Heart left ventricle (tissue), 16 donors: ENCODE measurements at regions of chr5 and their contacts with region 1.

Region 1: GRCh38 chr5:148730943-148731861 is 76.9 kb upstream of the HTR4 start:
- DNase-seq: peak; percentile 65 to 81 (median 76)
- ATAC-seq: peak; percentile 67 to 90 (median 86)
- H3K4me3 ChIP-seq: peak overlapping the region in 5 of 12 donors; percentile 7 to 28 (median 8)
- H3K27ac ChIP-seq: no peak overlapping the region
- H3K4me1 ChIP-seq: peaks cover 0 to 11% (median 2%) of the 10 kb centered on the region in 12 donors
- H3K27me3 ChIP-seq: no peaks in the 10 kb centered on the region
- CTCF ChIP-seq: peak; percentile 85 to 99 (median 92)
- POLR2A ChIP-seq: no peak

Region 2: GRCh38 chr5:147949711-147950573 is 781.3 kb before region 1 on chr5:
- intact Hi-C with region 1: loop called in 3 of 10 experiments (anchors 5 to 10 kb)
- DNase-seq: no peak
- ATAC-seq: peak in 1 of 4 donors; percentile 57
- H3K4me3 ChIP-seq: no peak overlapping the region
- H3K27ac ChIP-seq: no peak overlapping the region
- H3K4me1 ChIP-seq: no peaks in the 10 kb centered on the region
- H3K27me3 ChIP-seq: no peaks in the 10 kb centered on the region
- CTCF ChIP-seq: peak; percentile 54 to 78 (median 71)
- POLR2A ChIP-seq: no peak

Region 3: GRCh38 chr5:148290271-148291195 is 440.7 kb before region 1 on chr5:
- intact Hi-C with region 1: loop called in 6 of 10 experiments (anchors 2 to 10 kb)
- DNase-seq: no peak
- ATAC-seq: peak; percentile 55 to 65 (median 61)
- H3K4me3 ChIP-seq: no peak overlapping the region
- H3K27ac ChIP-seq: no peak overlapping the region
- H3K4me1 ChIP-seq: peaks cover 0 to 3% (median 0%) of the 10 kb centered on the region in 12 donors
- H3K27me3 ChIP-seq: no peaks in the 10 kb centered on the region
- CTCF ChIP-seq: peak; percentile 17 to 60 (median 45)
- POLR2A ChIP-seq: no peak

Region 4: GRCh38 chr5:148957591-148958202 is 226.5 kb after region 1 on chr5:
- intact Hi-C with region 1: loop called in 3 of 10 experiments (anchors 5 kb)
- DNase-seq: peak in 3 of 5 donors; percentile 20 to 47 (median 29)
- ATAC-seq: peak in 2 of 4 donors; percentile 43 to 53
- H3K4me3 ChIP-seq: no peak overlapping the region
- H3K27ac ChIP-seq: no peak overlapping the region
- H3K4me1 ChIP-seq: peaks cover 0 to 12% (median 0%) of the 10 kb centered on the region in 12 donors
- H3K27me3 ChIP-seq: no peaks in the 10 kb centered on the region
- CTCF ChIP-seq: peak; percentile 69 to 88 (median 80)
- POLR2A ChIP-seq: no peak

Region 5: GRCh38 chr5:149035372-149035790 is 304.2 kb after region 1 on chr5:
- intact Hi-C with region 1: loop called (anchors 1 to 5 kb)
- DNase-seq: peak; percentile 71 to 88 (median 77)
- ATAC-seq: peak; percentile 82 to 94 (median 91)
- H3K4me3 ChIP-seq: no peak overlapping the region
- H3K27ac ChIP-seq: no peak overlapping the region
- H3K4me1 ChIP-seq: peaks cover 0 to 39% (median 8%) of the 10 kb centered on the region in 12 donors
- H3K27me3 ChIP-seq: no peaks in the 10 kb centered on the region
- CTCF ChIP-seq: peak; percentile 69 to 91 (median 86)
- POLR2A ChIP-seq: no peak

Region 6: GRCh38 chr5:149240354-149240998 is 509.3 kb after region 1 on chr5:
- intact Hi-C with region 1: loop called in 1 of 10 experiments (anchors 10 kb)
- DNase-seq: peak in 2 of 5 donors; percentile 34 to 68
- ATAC-seq: no peak
- H3K4me3 ChIP-seq: no peak overlapping the region
- H3K27ac ChIP-seq: peak overlapping the region in 1 of 12 donors; percentile 24
- H3K4me1 ChIP-seq: peaks cover 0 to 17% (median 3%) of the 10 kb centered on the region in 12 donors
- H3K27me3 ChIP-seq: no peaks in the 10 kb centered on the region
- CTCF ChIP-seq: no peak
- POLR2A ChIP-seq: no peak

Region 7: DNA sequence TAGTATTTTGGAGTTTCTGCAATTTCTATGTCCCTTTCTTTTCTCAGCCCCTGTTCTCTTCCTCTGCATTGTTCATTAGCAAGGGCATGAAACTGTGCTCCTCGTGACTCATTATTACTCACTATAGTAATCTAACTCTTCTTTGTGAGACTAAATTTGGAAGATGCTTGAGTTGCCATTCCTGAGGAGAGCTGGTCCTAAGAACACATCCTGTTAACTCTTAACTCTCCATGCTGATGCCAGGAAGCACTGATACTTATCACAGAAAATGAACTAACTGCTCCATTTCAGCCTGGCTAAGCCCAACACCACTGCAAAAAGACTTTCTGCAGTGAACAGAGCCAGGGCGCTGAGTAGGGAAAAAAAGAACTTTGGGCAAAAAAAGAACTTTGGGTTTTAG is 830.6 kb after region 1 on chr5:
- intact Hi-C with region 1: loop called in 1 of 10 experiments (anchors 10 kb)
- DNase-seq: peak in 1 of 5 donors; percentile 40
- ATAC-seq: peak; percentile 87 to 94 (median 94)
- H3K4me3 ChIP-seq: peak overlapping the region in 7 of 12 donors; percentile 1 to 25 (median 16)
- H3K27ac ChIP-seq: peak overlapping the region; percentile 57 to 90 (median 84)
- H3K4me1 ChIP-seq: peaks cover 0 to 47% (median 32%) of the 10 kb centered on the region in 12 donors
- H3K27me3 ChIP-seq: no peaks in the 10 kb centered on the region
- CTCF ChIP-seq: no peak
- POLR2A ChIP-seq: no peak